GM10248 (cell line): ENCODE measurements at regions of chr17 and their contacts with region 1.

Region 1: DNA sequence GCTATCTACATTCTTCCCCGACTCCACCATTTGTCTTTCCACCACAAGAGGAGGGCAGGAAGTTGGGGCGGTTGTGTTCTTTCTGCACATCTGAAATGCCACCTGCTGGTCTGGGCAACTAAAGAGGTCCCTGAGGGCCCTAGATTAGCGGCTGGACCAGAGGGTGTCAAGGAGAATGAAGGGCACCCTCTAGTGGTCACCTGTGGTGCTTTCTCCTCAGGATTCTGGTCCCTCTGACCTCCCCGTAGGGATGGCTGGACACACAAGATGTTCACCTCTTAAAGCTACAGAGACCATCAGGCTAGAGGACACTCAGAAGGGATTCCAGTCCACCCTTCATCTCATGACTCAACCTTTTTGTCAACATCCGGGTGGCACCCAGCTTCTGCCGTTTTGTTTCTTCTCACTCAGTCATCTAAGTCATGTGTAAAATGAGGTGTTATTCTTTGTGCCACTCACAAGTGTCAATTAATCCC is 2.9 kb upstream of the SCIMP start:
- DNase-seq: peak; percentile 65
- CTCF ChIP-seq: peak; percentile 87

Region 2: GRCh38 chr17:4872786-4873185 is 364.8 kb before region 1 on chr17:
- CTCF ChIA-PET with region 1: no interaction called
- POLR2A ChIA-PET with region 1: no interaction called
- DNase-seq: no peak
- CTCF ChIP-seq: no peak

Region 3: GRCh38 chr17:5181509-5182305 is 55.9 kb before region 1 on chr17:
- CTCF ChIA-PET with region 1: no interaction called
- POLR2A ChIA-PET with region 1: no interaction called
- DNase-seq: no peak
- CTCF ChIP-seq: no peak

Region 4: GRCh38 chr17:5191541-5192417 is 45.8 kb before region 1 on chr17 and contains the start of gene ZNF594:
- CTCF ChIA-PET with region 1: interaction called, 110 read pairs
- POLR2A ChIA-PET with region 1: interaction called, 5 read pairs
- DNase-seq: peak; percentile 99
- CTCF ChIP-seq: peak; percentile 85

Region 5: DNA sequence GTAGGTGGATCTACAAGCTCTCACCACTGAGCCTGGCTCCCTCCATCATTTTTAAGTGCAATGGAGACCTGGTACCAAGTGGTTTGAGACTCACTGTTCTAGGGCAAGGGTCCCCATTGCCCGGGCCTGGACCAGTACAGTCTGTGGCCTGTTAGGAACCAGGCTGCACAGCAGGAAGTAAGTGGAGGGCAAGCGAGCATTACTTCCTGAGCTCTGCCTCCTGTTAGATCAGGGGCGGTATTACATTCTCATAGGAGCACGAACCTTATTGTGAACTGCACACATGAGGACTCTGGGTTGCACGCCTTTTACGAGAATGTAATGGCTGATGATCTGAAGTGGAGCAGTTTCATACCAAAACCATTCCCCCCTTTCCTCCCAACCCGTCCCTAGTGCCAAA is 39.1 kb before region 1 on chr17:
- CTCF ChIA-PET with region 1: interaction called, 110 read pairs
- POLR2A ChIA-PET with region 1: no interaction called
- DNase-seq: no peak
- CTCF ChIP-seq: no peak

Region 6: DNA sequence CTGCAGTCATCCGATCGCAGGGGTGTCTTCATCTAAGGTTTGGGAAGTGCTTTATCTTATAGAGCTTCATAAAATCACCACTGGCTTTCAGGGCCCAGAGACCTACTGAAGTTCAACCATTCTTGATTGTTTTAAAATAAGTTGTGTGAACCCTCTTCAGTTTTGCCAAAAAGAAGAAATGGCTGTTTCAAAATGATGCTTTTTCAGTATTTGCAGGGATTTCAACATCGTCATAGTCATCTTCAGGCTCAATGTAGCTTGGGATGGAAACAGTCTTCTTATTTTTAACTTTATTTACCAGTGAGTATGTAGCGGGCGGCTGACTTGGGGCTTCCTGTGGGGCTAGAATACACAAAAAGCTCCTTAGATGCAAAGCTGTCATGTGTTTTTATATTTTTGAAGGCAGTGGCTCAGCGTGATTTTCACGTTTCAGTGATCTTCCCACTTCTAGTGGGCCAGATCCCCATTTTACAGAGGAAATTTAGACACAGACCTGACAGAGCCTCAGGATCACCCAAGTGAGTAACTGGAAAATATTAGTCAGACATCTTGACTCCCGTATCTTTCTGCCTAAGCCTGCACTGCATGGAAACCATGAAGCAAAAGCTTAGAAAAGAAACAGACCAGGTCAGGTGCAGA is 26.8 kb before region 1 on chr17:
- CTCF ChIA-PET with region 1: interaction called, 13 read pairs
- POLR2A ChIA-PET with region 1: interaction called, 3 read pairs
- DNase-seq: peak; percentile 35
- CTCF ChIP-seq: no peak

Region 7: DNA sequence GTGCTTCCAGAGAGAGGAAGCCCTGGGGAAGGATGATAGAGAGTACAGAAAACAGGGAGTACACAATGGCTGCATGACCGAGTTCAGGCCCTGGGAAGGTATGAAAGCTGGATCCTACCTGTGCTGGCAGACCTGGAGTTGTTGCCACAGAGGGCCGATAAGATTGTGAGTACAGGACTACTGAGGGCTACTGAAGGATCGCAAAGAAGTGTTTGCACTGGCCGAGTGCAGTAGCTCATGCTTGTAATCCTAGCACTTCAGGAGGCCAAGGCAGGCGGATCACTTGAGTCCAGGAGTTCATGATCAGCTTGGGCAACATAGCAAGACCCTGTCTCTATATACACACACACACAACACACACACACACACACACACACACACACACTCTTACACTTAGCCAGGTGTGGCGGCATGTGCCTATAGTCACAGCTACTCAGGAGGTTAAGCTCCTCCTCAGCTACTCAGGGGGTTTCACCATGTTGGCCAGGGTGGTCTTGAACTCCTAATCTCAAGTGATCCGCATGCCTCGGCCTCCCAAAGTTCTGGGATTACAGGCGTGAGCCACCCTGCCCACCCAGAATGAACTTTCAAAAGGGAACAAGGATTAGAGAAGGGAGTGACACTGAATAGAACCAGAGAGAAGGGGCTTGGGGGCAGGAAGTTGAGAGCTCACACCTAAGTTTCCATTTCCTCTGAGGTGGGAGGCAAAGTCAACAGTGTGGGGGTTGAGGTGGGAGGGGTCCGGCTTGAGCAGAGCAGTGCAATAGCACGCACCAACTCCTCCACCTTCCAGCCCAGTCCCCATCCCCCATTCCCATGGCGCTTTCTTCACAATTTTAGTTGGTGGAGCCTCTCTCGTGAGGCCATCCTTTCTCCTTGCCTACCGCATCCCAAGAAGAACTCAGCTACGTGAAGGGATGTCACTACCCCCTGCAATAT is 10.4 kb before region 1 on chr17:
- CTCF ChIA-PET with region 1: interaction called, 89 read pairs
- POLR2A ChIA-PET with region 1: interaction called, 18 read pairs
- DNase-seq: peak; percentile 61
- CTCF ChIP-seq: no peak

Region 8: DNA sequence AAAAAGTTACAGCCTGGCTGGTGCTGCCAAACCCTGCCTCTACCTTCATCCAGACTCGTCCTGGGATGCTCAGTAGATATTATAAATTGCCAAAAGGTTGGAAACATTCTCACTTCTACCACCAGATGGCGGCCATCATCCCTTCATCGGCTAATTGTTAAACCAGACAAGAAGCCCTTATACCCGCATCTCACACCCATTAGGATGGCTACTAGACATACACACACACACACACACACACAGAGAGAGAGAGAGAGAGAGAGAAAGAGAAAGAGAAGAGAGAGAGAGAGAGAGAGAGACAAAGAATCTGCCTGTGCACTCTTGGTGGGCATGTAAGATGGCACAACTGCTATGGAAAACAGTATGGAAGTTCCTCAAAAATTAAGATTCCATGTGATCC is 12.0 kb after region 1 on chr17:
- CTCF ChIA-PET with region 1: interaction called, 41 read pairs
- POLR2A ChIA-PET with region 1: no interaction called
- DNase-seq: peak; percentile 77
- CTCF ChIP-seq: peak; percentile 66

Region 9: GRCh38 chr17:5264893-5265292 is 27.3 kb after region 1 on chr17:
- CTCF ChIA-PET with region 1: no interaction called
- POLR2A ChIA-PET with region 1: no interaction called
- DNase-seq: no peak
- CTCF ChIP-seq: no peak